Dendritic cell treated with granulocyte-macrophage colony-stimulating factor and Interleukin-4, amounts not matched to agents 40 ng/mL and 50 ng/mL, for 4 days (primary cell): ENCODE measurements at regions of chr12 and their contacts with region 1.

Region 1: GRCh38 chr12:6533923-6534694 is at the start of gene GAPDH:
- H3K4me3 Mint-ChIP-seq: peak within 1 kb of the TSS; percentile 91
- H3K27ac Mint-ChIP-seq: peak within 1 kb of the TSS; percentile 87
- H3K4me1 Mint-ChIP-seq: peaks cover 54% of the 10 kb centered on the region
- H3K27me3 Mint-ChIP-seq: no peaks in the 10 kb centered on the region

Region 2: GRCh38 chr12:6323340-6323994 is 210.6 kb before region 1 on chr12:
- intact Hi-C with region 1: loop called (anchors 5 kb)
- H3K4me3 Mint-ChIP-seq: peak overlapping the region; percentile 13
- H3K27ac Mint-ChIP-seq: peak overlapping the region; percentile 91
- H3K4me1 Mint-ChIP-seq: peaks cover 65% of the 10 kb centered on the region
- H3K27me3 Mint-ChIP-seq: peaks cover 19% of the 10 kb centered on the region

Region 3: GRCh38 chr12:6423267-6424007 is 110.7 kb before region 1 on chr12:
- intact Hi-C with region 1: loop called (anchors 2 kb)
- H3K4me3 Mint-ChIP-seq: no peak overlapping the region
- H3K27ac Mint-ChIP-seq: no peak overlapping the region
- H3K4me1 Mint-ChIP-seq: peaks cover 25% of the 10 kb centered on the region
- H3K27me3 Mint-ChIP-seq: no peaks in the 10 kb centered on the region

Region 4: GRCh38 chr12:6470375-6471163 is 63.5 kb before region 1 on chr12 and contains the start of gene VAMP1:
- intact Hi-C with region 1: loop called (anchors 10 kb)
- H3K4me3 Mint-ChIP-seq: peak within 1 kb of the TSS; percentile 82
- H3K27ac Mint-ChIP-seq: peak within 1 kb of the TSS; percentile 94
- H3K4me1 Mint-ChIP-seq: peaks cover 51% of the 10 kb centered on the region
- H3K27me3 Mint-ChIP-seq: peaks cover 2% of the 10 kb centered on the region

Region 5: GRCh38 chr12:6493497-6494257 is 40.4 kb before region 1 on chr12 and contains the start of gene NCAPD2:
- intact Hi-C with region 1: loop called (anchors 1 kb)
- H3K4me3 Mint-ChIP-seq: peak within 1 kb of the TSS; percentile 95
- H3K27ac Mint-ChIP-seq: peak within 1 kb of the TSS; percentile 99
- H3K4me1 Mint-ChIP-seq: peaks cover 15% of the 10 kb centered on the region
- H3K27me3 Mint-ChIP-seq: no peaks in the 10 kb centered on the region